IMR-90 (cell line): ENCODE measurements at regions of chr5 and their contacts with region 1.

Region 1: GRCh38 chr5:167716126-167716775 is 575.2 kb upstream of the WWC1 start:
- DNase-seq: peak; percentile 77
- ATAC-seq: peak; percentile 72
- H3K4me3 ChIP-seq: no peak overlapping the region
- H3K27ac ChIP-seq: peak overlapping the region; percentile 30; the same call in 1 of the 2 replicates
- H3K4me1 ChIP-seq: peaks cover 12% of the 10 kb centered on the region
- H3K27me3 ChIP-seq: no peaks in the 10 kb centered on the region
- CTCF ChIP-seq: no peak
- POLR2A ChIP-seq: no peak
- RAD21 ChIP-seq: no peak

Region 2: GRCh38 chr5:167633910-167634341 is 82.3 kb before region 1 on chr5:
- CTCF ChIA-PET with region 1: no interaction called
- POLR2A ChIA-PET with region 1: no interaction called
- dilution Hi-C with region 1: no loop called
- in situ Hi-C with region 1: no loop called
- intact Hi-C with region 1: loop called (anchors 5 kb)
- DNase-seq: peak; percentile 57
- ATAC-seq: peak; percentile 67
- H3K4me3 ChIP-seq: no peak overlapping the region
- H3K27ac ChIP-seq: no peak overlapping the region
- H3K4me1 ChIP-seq: peaks cover 3% of the 10 kb centered on the region; the same call in 1 of the 2 replicates
- H3K27me3 ChIP-seq: no peaks in the 10 kb centered on the region
- CTCF ChIP-seq: no peak
- POLR2A ChIP-seq: no peak
- RAD21 ChIP-seq: no peak